ENCODE measurements at regions of chrX and their contacts with region 1.

Region 1: DNA sequence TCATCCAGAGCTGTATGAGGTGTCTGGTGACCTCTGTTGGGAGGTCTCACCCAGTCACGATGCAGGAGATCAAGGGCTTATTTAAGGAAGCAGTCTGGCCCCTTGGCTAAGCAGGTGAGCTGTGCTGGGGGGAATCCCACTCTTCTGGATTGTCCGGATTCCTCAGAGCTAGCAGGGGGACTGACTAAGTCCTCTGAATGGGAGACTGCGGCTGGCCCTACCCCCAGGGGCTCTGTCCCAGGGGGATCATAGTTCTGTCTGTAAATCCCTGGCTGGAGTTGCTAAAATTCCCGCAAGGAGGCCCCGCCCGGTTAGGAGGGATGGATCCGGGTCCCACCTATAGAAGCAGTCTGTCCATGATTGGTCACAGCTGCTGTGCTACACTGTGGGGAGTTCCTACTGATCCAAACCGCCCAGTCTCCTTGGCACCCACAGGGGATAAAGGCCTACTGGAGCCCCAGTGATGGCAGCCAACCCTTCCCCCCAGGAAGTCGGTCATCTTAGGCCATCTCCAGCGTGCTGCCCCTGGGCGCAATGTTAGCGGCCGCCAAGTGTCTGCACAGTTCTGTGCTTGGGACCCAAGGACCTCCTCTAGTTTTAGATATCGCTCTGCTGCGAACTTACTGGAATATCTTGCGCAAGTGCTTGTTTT is 118.2 kb upstream of the KLF8 start:
- DNase-seq: no peak
- ATAC-seq: no peak
- H3K4me3 ChIP-seq: no peak overlapping the region
- H3K4me3 Mint-ChIP-seq: no peak overlapping the region
- H3K27ac ChIP-seq: no peak overlapping the region
- H3K27ac Mint-ChIP-seq: no peak overlapping the region
- H3K4me1 ChIP-seq: no peaks in the 10 kb centered on the region
- H3K4me1 Mint-ChIP-seq: no peaks in the 10 kb centered on the region
- H3K27me3 ChIP-seq: no peaks in the 10 kb centered on the region
- H3K27me3 Mint-ChIP-seq: peaks cover 0 to 12% of the 10 kb centered on the region in 2 donors

Region 2: GRCh38 chrX:56211701-56212100 is 97.8 kb after region 1 on chrX:
- CTCF ChIA-PET with region 1: no interaction called
- POLR2A ChIA-PET with region 1: interaction called in 1 of 2 experiments, 10 read pairs
- DNase-seq: no peak
- ATAC-seq: no peak
- H3K4me3 ChIP-seq: no peak overlapping the region
- H3K4me3 Mint-ChIP-seq: no peak overlapping the region
- H3K27ac ChIP-seq: no peak overlapping the region
- H3K27ac Mint-ChIP-seq: no peak overlapping the region
- H3K4me1 ChIP-seq: no peaks in the 10 kb centered on the region
- H3K4me1 Mint-ChIP-seq: no peaks in the 10 kb centered on the region
- H3K27me3 ChIP-seq: no peaks in the 10 kb centered on the region
- H3K27me3 Mint-ChIP-seq: peaks cover 0 to 25% of the 10 kb centered on the region in 2 donors

Measured in T-cell (primary cell).